Heart left ventricle (tissue), 16 donors: ENCODE measurements at regions of chr15 and their contacts with region 1.

Region 1: DNA sequence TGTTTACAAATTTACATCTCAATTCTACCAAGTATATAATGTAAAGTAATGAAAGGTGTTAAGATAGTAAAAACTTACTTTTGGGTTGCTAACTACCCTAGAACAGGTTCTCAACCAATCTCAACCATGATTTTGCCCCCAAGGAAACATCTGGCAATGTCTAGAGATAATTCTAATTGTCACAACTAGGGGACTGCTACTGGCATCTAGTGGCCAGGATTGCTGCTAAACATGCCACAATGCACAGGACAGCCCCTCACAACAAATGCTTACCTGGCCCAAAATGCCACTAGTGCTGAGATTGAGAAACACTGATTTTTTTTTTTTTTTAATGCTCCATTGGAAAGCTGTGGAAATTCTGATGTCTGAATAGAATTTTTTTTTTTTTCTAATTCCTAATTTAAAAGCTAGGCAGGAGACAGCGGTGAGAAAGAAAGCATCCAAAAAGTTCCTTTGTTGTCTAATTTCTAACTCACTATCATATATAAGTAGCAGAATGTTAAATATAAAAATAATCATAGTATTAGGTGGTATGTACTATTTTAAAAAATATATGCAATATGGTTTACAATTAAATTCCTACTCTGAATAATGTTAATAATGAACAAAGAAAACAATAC is 81.5 kb downstream of the TJP1 start:
- DNase-seq: no peak
- ATAC-seq: no peak
- H3K4me3 ChIP-seq: no peak overlapping the region
- H3K27ac ChIP-seq: no peak overlapping the region
- H3K4me1 ChIP-seq: peaks cover 0 to 15% (median 6%) of the 10 kb centered on the region in 12 donors
- H3K27me3 ChIP-seq: no peaks in the 10 kb centered on the region
- CTCF ChIP-seq: peak in 2 of 12 donors; percentile 4 to 8
- POLR2A ChIP-seq: no peak

Region 2: GRCh38 chr15:29704950-29705597 is 35.7 kb before region 1 on chr15:
- intact Hi-C with region 1: loop called in 1 of 10 experiments (anchors 5 kb)
- DNase-seq: no peak
- ATAC-seq: peak in 3 of 4 donors; percentile 10 to 35 (median 16)
- H3K4me3 ChIP-seq: no peak overlapping the region
- H3K27ac ChIP-seq: no peak overlapping the region
- H3K4me1 ChIP-seq: peaks cover 0 to 4% (median 0%) of the 10 kb centered on the region in 12 donors
- H3K27me3 ChIP-seq: no peaks in the 10 kb centered on the region
- CTCF ChIP-seq: no peak
- POLR2A ChIP-seq: no peak

Region 3: DNA sequence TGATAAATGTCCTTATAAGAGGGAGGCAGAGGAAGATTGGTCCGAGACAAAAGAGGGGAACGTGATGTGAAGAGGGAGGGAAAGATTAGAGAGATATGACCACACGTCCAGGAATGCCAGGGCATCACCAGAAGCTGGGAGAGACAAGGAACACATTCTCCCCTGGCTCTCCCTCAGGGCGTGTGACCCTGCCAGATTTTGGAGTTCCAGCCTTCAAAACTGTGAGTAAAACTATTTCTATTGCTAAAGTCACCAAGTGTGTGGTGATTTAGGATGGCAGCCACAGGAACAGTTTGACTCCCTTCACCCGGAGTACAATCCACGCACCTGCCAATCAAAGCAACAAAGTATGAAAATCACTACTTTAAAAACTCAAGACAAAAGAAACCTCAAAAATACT is 113.6 kb after region 1 on chr15:
- intact Hi-C with region 1: no loop called
- DNase-seq: no peak
- ATAC-seq: no peak
- H3K4me3 ChIP-seq: no peak overlapping the region
- H3K27ac ChIP-seq: no peak overlapping the region
- H3K4me1 ChIP-seq: peaks cover 0 to 9% (median 0%) of the 10 kb centered on the region in 12 donors
- H3K27me3 ChIP-seq: no peaks in the 10 kb centered on the region
- CTCF ChIP-seq: no peak
- POLR2A ChIP-seq: no peak

Region 4: GRCh38 chr15:29925227-29926082 is 184.7 kb after region 1 on chr15:
- intact Hi-C with region 1: loop called in 7 of 10 experiments (anchors 2 to 5 kb)
- DNase-seq: peak; percentile 81 to 85 (median 82)
- ATAC-seq: peak; percentile 95 to 98 (median 96)
- H3K4me3 ChIP-seq: no peak overlapping the region
- H3K27ac ChIP-seq: peak overlapping the region in 7 of 12 donors; percentile 1 to 58 (median 31)
- H3K4me1 ChIP-seq: peaks cover 0 to 22% (median 15%) of the 10 kb centered on the region in 12 donors
- H3K27me3 ChIP-seq: no peaks in the 10 kb centered on the region
- CTCF ChIP-seq: peak; percentile 77 to 96 (median 88)
- POLR2A ChIP-seq: no peak